Caco-2 (cell line): ENCODE measurements at regions of chr13 and their contacts with region 1.

Region 1: DNA sequence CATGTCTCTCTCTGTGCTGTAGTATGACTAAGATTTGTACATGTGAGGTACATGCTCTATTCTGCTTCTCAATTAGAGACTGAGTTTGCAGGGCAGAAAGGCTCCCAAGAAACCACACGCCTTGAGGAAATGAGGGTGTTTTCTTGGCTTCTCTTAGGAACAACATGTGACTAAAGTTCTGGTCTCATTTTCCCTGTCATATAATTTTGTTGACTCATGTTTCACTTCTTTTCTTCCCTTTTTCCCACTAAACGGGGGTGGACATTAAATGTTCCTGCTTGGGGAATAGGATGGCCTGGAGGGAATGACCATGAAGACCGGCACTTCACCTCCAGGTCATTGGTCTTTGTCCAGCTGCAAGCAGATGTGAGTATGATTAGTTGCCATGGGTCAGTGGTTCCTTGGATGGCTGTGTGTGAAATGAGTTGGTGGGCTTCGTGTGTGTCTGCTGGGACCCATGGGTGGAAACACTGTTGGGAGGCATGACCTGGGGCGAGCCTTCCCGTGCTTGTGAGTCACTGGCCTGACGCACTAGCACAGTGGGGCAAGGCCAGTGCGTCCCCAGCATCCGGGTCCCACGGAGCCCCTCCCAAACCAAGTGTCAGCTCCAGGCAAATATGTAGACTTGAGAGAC is 56.6 kb downstream of the COL4A1 start:
- DNase-seq: no peak
- H3K4me3 ChIP-seq: no peak overlapping the region
- H3K4me3 Mint-ChIP-seq: no peak overlapping the region
- H3K27ac Mint-ChIP-seq: no peak overlapping the region
- H3K4me1 ChIP-seq: peaks cover 10% of the 10 kb centered on the region
- H3K4me1 Mint-ChIP-seq: peaks cover 10% of the 10 kb centered on the region
- H3K27me3 ChIP-seq: no peaks in the 10 kb centered on the region
- H3K27me3 Mint-ChIP-seq: no peaks in the 10 kb centered on the region
- CTCF ChIP-seq: no peak

Region 2: DNA sequence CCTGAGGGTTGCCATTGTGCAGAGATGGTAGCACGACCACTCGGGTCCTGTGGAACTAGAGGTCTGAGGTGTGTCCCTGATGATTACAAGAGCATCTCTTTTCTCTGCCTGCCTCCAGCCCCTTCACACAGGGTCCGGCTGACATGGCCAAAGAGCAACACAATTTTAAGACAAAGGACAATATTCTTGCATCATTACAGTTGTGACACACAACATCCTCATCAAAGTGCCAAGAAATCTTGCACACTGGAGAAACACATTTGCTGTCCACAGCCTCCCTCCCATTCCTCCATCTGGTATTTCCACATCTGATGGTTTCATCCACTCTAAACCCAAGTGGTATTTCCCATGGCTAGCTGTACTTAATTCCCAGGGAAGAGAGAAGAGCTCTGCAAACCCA is 43.8 kb after region 1 on chr13:
- CTCF ChIA-PET with region 1: no interaction called
- POLR2A ChIA-PET with region 1: no interaction called
- intact Hi-C with region 1: loop called (anchors 1 kb)
- DNase-seq: no peak
- H3K4me3 ChIP-seq: no peak overlapping the region
- H3K4me3 Mint-ChIP-seq: no peak overlapping the region
- H3K27ac Mint-ChIP-seq: no peak overlapping the region
- H3K4me1 ChIP-seq: no peaks in the 10 kb centered on the region; the same call in 1 of the 2 replicates
- H3K4me1 Mint-ChIP-seq: no peaks in the 10 kb centered on the region
- H3K27me3 ChIP-seq: no peaks in the 10 kb centered on the region
- H3K27me3 Mint-ChIP-seq: no peaks in the 10 kb centered on the region
- CTCF ChIP-seq: no peak

Region 3: GRCh38 chr13:110412132-110412914 is 161.9 kb after region 1 on chr13:
- CTCF ChIA-PET with region 1: interaction called, 4 read pairs
- POLR2A ChIA-PET with region 1: no interaction called
- intact Hi-C with region 1: loop called (anchors 1 kb)
- DNase-seq: peak; percentile 80 to 88
- H3K4me3 ChIP-seq: no peak overlapping the region
- H3K4me3 Mint-ChIP-seq: no peak overlapping the region
- H3K27ac Mint-ChIP-seq: peak overlapping the region; percentile 83
- H3K4me1 ChIP-seq: peaks cover 13% of the 10 kb centered on the region
- H3K4me1 Mint-ChIP-seq: peaks cover 12% of the 10 kb centered on the region
- H3K27me3 ChIP-seq: no peaks in the 10 kb centered on the region
- H3K27me3 Mint-ChIP-seq: no peaks in the 10 kb centered on the region
- CTCF ChIP-seq: peak; percentile 94